CD4-positive, alpha-beta T cell (primary cell): ENCODE measurements at regions of chr17 and their contacts with region 1.

Region 1: DNA sequence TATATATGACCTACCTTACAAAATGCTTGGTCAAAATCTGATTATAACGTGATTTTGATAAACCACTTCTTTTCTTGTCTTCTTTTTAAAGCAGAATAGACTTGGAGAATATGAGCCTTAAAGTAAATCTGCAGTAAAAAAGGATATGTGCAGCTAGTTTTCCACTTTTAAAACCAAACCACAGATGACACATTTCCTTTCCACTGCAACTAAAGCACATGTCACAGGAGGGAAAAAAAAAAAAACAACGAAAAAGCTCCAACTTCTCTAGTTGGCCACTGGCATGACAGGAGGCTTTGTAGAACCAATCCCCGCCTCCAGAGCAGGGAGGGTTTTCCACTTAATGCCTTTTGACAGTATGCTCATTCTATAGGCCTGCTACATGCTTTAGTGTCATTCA is at the start of gene EVI2A:
- DNase-seq: peak; percentile 52 to 95 (median 65)
- ATAC-seq: peak; percentile 85
- H3K4me3 ChIP-seq: peak within 1 kb of the TSS; percentile 82
- H3K4me3 Mint-ChIP-seq: peak within 1 kb of the TSS; percentile 91
- H3K27ac ChIP-seq: peak within 1 kb of the TSS; percentile 83 to 87
- H3K27ac Mint-ChIP-seq: peak within 1 kb of the TSS; percentile 93
- H3K4me1 ChIP-seq: peaks cover 7% of the 10 kb centered on the region
- H3K4me1 Mint-ChIP-seq: peaks cover 45% of the 10 kb centered on the region
- H3K27me3 ChIP-seq: no peaks in the 10 kb centered on the region
- H3K27me3 Mint-ChIP-seq: no peaks in the 10 kb centered on the region
- CTCF ChIP-seq: no peak
- total RNA-seq, gene EVI2A: 37.8 to 38.4 TPM

Region 2: GRCh38 chr17:31297090-31297489 is 24.4 kb before region 1 on chr17 and contains the start of gene OMG:
- CTCF ChIA-PET with region 1: interaction called, 3 read pairs
- POLR2A ChIA-PET with region 1: interaction called, 13 read pairs
- intact Hi-C with region 1: no loop called
- DNase-seq: no peak
- ATAC-seq: no peak
- H3K4me3 ChIP-seq: no peak within 1 kb of the TSS
- H3K4me3 Mint-ChIP-seq: no peak within 1 kb of the TSS
- H3K27ac ChIP-seq: no peak within 1 kb of the TSS
- H3K27ac Mint-ChIP-seq: no peak within 1 kb of the TSS
- H3K4me1 ChIP-seq: no peaks in the 10 kb centered on the region
- H3K4me1 Mint-ChIP-seq: peaks cover 40% of the 10 kb centered on the region
- H3K27me3 ChIP-seq: no peaks in the 10 kb centered on the region
- H3K27me3 Mint-ChIP-seq: no peaks in the 10 kb centered on the region
- CTCF ChIP-seq: no peak
- total RNA-seq, gene OMG: 0.44 to 0.47 TPM

Region 3: GRCh38 chr17:31307640-31308039 is 13.8 kb before region 1 on chr17:
- CTCF ChIA-PET with region 1: interaction called, 7 read pairs
- POLR2A ChIA-PET with region 1: interaction called, 157 read pairs
- intact Hi-C with region 1: loop called (anchors 1 kb)
- DNase-seq: no peak
- ATAC-seq: no peak
- H3K4me3 ChIP-seq: peak overlapping the region; percentile 67
- H3K4me3 Mint-ChIP-seq: peak overlapping the region; percentile 92
- H3K27ac ChIP-seq: peak overlapping the region; percentile 74 to 93
- H3K27ac Mint-ChIP-seq: peak overlapping the region; percentile 97
- H3K4me1 ChIP-seq: peaks cover 20% of the 10 kb centered on the region
- H3K4me1 Mint-ChIP-seq: peaks cover 72% of the 10 kb centered on the region
- H3K27me3 ChIP-seq: no peaks in the 10 kb centered on the region
- H3K27me3 Mint-ChIP-seq: no peaks in the 10 kb centered on the region
- CTCF ChIP-seq: no peak